Activated B cell treated with CpG ODN at 0.5 μM for 24 hours (primary cell): ENCODE measurements at regions of chr5 and their contacts with region 1.

Region 1: GRCh38 chr5:137997726-137998213 is 35.1 kb downstream of the FAM13B start:
- DNase-seq: no peak
- ATAC-seq: peak; percentile 84
- H3K4me3 Mint-ChIP-seq: peak overlapping the region; percentile 32
- H3K27ac Mint-ChIP-seq: peak overlapping the region; percentile 78
- H3K4me1 Mint-ChIP-seq: peaks cover 45% of the 10 kb centered on the region
- H3K27me3 Mint-ChIP-seq: no peaks in the 10 kb centered on the region
- CTCF ChIP-seq: no peak

Region 2: GRCh38 chr5:137960141-137960540 is 37.6 kb before region 1 on chr5:
- CTCF ChIA-PET with region 1: no interaction called
- POLR2A ChIA-PET with region 1: no interaction called
- intact Hi-C with region 1: loop called (anchors 5 kb)
- DNase-seq: no peak
- ATAC-seq: no peak
- H3K4me3 Mint-ChIP-seq: no peak overlapping the region
- H3K27ac Mint-ChIP-seq: peak overlapping the region; percentile 24
- H3K4me1 Mint-ChIP-seq: no peaks in the 10 kb centered on the region
- H3K27me3 Mint-ChIP-seq: no peaks in the 10 kb centered on the region
- CTCF ChIP-seq: no peak

Region 3: GRCh38 chr5:139293504-139294373 is 1296.0 kb after region 1 on chr5 and contains the start of gene MATR3:
- CTCF ChIA-PET with region 1: no interaction called
- POLR2A ChIA-PET with region 1: no interaction called
- intact Hi-C with region 1: no loop called
- DNase-seq: peak; percentile 87
- ATAC-seq: peak; percentile 90
- H3K4me3 Mint-ChIP-seq: peak within 1 kb of the TSS; percentile 97
- H3K27ac Mint-ChIP-seq: peak within 1 kb of the TSS; percentile 96
- H3K4me1 Mint-ChIP-seq: peaks cover 48% of the 10 kb centered on the region
- H3K27me3 Mint-ChIP-seq: no peaks in the 10 kb centered on the region
- CTCF ChIP-seq: no peak
- total RNA-seq, gene MATR3: 242 and 294 TPM in 2 replicates